ENCODE measurements at regions of chr4 and their contacts with region 1.

Region 1: DNA sequence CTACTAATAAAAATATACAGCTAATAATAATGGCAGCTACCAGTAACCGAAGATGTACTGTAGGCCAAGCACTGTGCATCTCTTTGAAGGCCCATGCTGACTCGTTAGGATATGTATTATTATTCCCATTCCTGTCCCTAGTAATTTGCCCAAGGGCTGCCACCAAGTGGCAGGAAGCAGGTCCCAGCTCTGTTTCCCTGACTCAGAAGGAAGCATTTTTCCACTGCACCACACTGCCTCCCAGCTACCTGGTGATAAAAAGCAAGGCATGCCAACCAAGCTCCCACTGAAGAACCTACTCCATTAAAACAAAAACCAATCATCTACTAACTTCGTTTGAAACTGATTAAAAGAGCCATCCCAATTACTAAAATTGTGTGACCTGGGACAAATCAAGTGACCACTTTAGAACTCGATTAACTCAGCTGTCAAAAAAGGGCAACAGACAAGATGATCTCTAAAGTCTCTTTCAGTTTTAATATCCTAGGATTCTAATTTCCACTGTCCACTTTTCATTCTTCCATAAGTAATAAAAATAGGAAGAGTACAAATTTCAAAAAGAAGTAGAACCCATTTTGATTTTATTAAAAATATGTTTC is 24.3 kb upstream of the PGM2 start:
- DNase-seq: no peak
- ATAC-seq: peak; percentile 54
- H3K4me3 ChIP-seq: no peak overlapping the region
- H3K27ac ChIP-seq: no peak overlapping the region
- H3K4me1 ChIP-seq: no peaks in the 10 kb centered on the region
- H3K27me3 ChIP-seq: no peaks in the 10 kb centered on the region

Region 2: GRCh38 chr4:36786519-36786918 is 1015.6 kb before region 1 on chr4:
- intact Hi-C with region 1: no loop called
- DNase-seq: no peak
- ATAC-seq: no peak
- H3K4me3 ChIP-seq: no peak overlapping the region
- H3K27ac ChIP-seq: no peak overlapping the region
- H3K4me1 ChIP-seq: no peaks in the 10 kb centered on the region
- H3K27me3 ChIP-seq: no peaks in the 10 kb centered on the region

Region 3: GRCh38 chr4:37603070-37603468 is 199.1 kb before region 1 on chr4:
- intact Hi-C with region 1: loop called (anchors 2 to 5 kb)
- DNase-seq: peak; percentile 86 to 93
- ATAC-seq: peak; percentile 93
- H3K4me3 ChIP-seq: no peak overlapping the region
- H3K27ac ChIP-seq: no peak overlapping the region
- H3K4me1 ChIP-seq: no peaks in the 10 kb centered on the region
- H3K27me3 ChIP-seq: no peaks in the 10 kb centered on the region